ENCODE measurements at regions of chr2 and their contacts with region 1.

Region 1: GRCh38 chr2:17753803-17754663 is at the starts of genes GEN1 and SMC6:
- DNase-seq: peak; percentile 94
- ATAC-seq: peak; percentile 99
- total RNA-seq, gene GEN1: 4.5 TPM
- total RNA-seq, gene SMC6: 12.1 TPM

Region 2: GRCh38 chr2:17827306-17827705 is 73.3 kb after region 1 on chr2:
- intact Hi-C with region 1: loop called (anchors 2 kb)
- DNase-seq: no peak
- ATAC-seq: no peak

Measured in Right ventricle myocardium superior (tissue), 1 donor.